ENCODE measurements at regions of chr19 and their contacts with region 1.

Region 1: DNA sequence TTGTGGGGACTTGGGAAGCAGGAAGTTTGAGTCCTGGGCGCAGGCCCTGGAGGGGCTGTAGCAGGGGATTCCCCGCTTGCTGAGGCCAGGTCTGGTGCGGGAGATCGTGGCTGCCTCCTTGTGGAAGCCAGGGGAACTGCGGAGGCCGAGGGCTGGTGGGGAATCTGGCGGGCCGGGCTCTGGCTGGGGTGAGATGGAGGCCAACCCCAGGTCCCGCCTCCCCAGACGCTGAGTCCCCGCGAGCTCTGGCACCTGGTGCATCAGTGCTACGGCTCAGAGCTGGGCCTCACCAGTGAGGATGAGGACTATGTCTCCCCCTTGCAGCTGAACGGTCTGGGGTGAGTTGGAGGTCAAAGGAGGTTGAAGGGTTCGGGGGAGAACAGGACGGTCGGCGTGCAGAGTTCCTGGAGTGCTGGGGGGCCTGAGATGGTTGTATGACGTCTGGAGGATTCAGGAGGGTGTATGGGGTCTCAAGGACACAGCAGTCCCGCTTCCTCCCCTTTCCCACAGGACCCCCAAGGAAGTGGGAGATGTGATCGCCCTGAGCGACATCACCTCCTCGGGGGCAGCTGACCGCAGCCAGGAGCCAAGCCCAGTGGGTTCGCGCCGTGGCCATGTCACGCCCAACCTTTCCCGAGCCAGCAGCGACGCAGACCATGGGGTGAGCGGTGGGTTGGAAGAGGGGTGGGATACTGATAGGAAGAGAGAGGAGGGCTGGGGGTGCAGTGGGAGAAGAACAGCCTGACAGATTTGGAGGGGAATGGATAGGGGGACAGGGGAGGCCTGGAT is 13.1 kb downstream of the GRAMD1A start:
- DNase-seq: peak; percentile 68 to 76 (median 73)
- H3K4me3 ChIP-seq: peak overlapping the region in 1 of 7 experiments; percentile 3
- H3K27ac ChIP-seq: no peak overlapping the region
- H3K4me1 ChIP-seq: peaks cover 2 to 33% (median 28%) of the 10 kb centered on the region in 4 experiments
- H3K27me3 ChIP-seq: no peaks in the 10 kb centered on the region

Region 2: DNA sequence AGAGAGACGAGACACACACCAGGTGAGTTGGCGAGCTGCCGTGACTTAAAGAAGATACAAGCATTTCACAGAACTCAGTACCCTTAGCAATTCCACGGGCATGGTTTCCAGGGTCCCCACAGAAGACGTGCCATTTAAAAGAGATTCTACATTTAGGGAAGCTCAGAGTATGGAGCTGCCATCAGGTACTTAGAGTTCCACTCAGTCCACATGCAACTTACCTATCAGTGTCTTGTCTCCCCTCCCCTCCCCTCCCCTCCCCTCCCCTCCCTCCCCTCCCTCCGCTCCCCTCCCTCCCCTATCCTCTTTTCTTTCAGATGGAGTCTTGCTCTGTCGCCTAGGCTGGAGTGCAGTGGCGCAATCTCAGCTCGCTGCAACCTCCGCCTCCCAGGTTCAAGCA is 74.3 kb before region 1 on chr19:
- CTCF ChIA-PET with region 1: no interaction called
- POLR2A ChIA-PET with region 1: no interaction called
- DNase-seq: no peak
- H3K4me3 ChIP-seq: no peak overlapping the region
- H3K27ac ChIP-seq: no peak overlapping the region
- H3K4me1 ChIP-seq: no peaks in the 10 kb centered on the region
- H3K27me3 ChIP-seq: no peaks in the 10 kb centered on the region

Region 3: DNA sequence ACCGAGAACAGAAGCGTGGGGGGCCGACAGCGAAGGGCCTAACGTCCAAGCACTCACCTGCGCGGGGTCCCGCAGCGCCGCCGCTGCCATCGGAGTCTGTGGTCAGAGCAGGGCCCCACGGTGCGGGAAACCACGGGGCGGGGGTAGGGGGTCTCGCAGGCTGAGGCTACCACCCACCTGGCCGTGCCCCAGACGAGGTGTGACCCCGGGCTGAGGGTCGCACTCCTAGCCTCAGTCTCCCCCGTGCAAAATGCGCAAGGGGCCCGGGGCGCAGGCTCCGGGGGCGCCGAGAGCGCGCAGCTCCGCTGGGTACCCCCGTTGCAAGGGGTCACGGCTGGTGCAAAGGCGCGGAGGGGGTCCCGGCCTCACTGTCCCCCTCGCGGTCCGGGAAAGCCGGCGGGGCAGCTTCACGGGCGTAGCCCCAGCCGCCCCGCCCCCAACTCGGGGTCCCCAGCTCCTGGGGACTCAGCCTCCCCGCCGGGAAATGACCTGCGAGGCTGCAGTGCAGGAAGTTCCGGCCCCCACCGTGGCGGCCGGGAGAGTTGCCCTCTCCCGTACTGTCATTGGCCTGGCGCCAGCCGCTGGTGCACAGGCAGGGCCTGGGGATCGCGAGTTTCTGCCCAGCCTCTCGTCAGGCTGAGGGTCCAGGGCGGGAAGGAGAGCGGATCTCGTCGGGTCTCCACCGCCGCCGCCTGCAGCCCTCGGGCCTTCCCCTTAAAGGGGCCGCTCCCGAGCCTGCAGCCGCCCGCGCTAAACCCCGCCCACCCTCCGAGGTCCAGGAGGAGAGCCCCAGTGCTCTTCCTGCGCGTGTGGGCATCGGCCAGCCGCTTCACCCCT is 49.4 kb before region 1 on chr19 and contains the start of gene ZNF792:
- CTCF ChIA-PET with region 1: interaction called, 249 read pairs
- POLR2A ChIA-PET with region 1: no interaction called
- DNase-seq: peak; percentile 30 to 67 (median 54)
- H3K4me3 ChIP-seq: peak within 1 kb of the TSS; percentile 83 to 94 (median 89)
- H3K27ac ChIP-seq: peak within 1 kb of the TSS; percentile 76 to 86
- H3K4me1 ChIP-seq: peaks cover 4 to 22% (median 18%) of the 10 kb centered on the region in 4 experiments
- H3K27me3 ChIP-seq: no peaks in the 10 kb centered on the region

Region 4: DNA sequence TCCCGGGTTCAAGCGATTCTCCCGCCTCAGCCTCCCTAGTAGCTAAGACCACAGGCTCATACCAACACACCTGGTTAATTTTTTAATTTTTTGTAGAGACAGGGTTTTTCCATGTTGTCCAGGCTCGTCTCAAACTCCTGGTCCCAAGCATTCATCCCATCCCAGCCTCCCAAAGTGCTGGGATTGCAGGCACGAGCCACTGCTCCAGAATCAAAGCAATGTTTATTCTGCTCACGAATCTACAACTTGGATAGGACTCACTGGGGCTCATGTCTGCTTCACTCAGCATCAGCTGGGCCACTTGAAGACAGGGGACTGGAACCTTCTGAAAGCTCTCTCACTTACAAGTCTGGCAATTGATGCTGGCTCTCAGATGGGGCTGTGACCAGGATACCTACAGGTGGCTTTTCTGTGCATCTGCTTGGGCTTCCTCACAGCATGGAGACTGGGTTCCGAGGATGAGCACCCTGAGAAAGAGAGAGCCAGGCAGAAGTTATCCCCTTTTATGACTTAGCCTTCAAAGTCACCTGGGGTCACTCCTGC is 41.0 kb before region 1 on chr19:
- CTCF ChIA-PET with region 1: interaction called, 249 read pairs
- POLR2A ChIA-PET with region 1: no interaction called
- DNase-seq: no peak
- H3K4me3 ChIP-seq: no peak overlapping the region
- H3K27ac ChIP-seq: no peak overlapping the region
- H3K4me1 ChIP-seq: peaks cover 0 to 9% (median 3%) of the 10 kb centered on the region in 4 experiments
- H3K27me3 ChIP-seq: no peaks in the 10 kb centered on the region

Region 5: DNA sequence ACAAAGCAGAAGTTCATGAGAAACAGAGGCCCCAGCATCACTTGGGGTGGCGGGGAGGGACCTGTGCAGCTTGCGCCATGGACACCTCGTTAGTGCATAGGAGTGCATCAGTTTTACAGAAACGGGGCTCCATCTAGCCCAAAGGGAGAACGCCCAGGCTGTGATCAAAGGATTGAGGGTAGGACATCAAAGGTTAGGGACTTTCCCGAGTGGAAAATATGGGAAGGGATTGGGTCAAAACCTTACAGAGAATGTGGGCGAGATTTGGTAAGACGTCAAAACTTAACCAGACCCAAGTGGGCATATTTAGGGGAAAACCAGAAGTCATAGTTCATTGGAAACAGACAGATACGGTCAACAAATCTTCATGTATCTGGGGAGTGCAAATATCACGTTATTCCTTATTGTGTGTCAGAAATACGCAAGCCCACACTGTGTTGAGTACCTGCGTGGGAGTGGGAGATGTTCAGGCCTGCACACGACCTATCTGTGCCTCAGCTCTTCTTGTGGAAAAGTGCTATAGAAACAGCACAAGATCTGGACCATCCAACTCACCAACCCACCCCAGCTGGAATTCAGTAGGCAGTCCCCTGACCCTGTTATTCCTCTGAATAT is 22.5 kb before region 1 on chr19:
- CTCF ChIA-PET with region 1: interaction called, 249 read pairs
- POLR2A ChIA-PET with region 1: no interaction called
- DNase-seq: no peak
- H3K4me3 ChIP-seq: no peak overlapping the region
- H3K27ac ChIP-seq: no peak overlapping the region
- H3K4me1 ChIP-seq: peaks cover 0 to 18% (median 13%) of the 10 kb centered on the region in 4 experiments
- H3K27me3 ChIP-seq: no peaks in the 10 kb centered on the region

Measured in common myeloid progenitor, CD34-positive (primary cell).